H1 (cell line): ENCODE measurements at regions of chr6 and their contacts with region 1.

Region 1: GRCh38 chr6:107691062-107691751 is 132.9 kb downstream of the SCML4 start:
- DNase-seq: no peak
- H3K4me3 ChIP-seq: no peak overlapping the region
- H3K27ac ChIP-seq: no peak overlapping the region
- H3K4me1 ChIP-seq: peaks cover 0 to 4% (median 0%) of the 10 kb centered on the region in 4 experiments; a peak in 2 of 7 replicates
- H3K27me3 ChIP-seq: no peaks in the 10 kb centered on the region
- CTCF ChIP-seq: no peak
- EP300 ChIP-seq: no peak
- POLR2A ChIP-seq: no peak
- RAD21 ChIP-seq: no peak

Region 2: GRCh38 chr6:107246972-107247615 is 444.1 kb before region 1 on chr6:
- CTCF ChIA-PET with region 1: no interaction called
- POLR2A ChIA-PET with region 1: no interaction called
- DNase-seq: no peak
- H3K4me3 ChIP-seq: no peak overlapping the region
- H3K27ac ChIP-seq: no peak overlapping the region
- H3K4me1 ChIP-seq: no peaks in the 10 kb centered on the region
- H3K27me3 ChIP-seq: no peaks in the 10 kb centered on the region
- CTCF ChIP-seq: no peak
- EP300 ChIP-seq: no peak
- POLR2A ChIP-seq: no peak
- RAD21 ChIP-seq: no peak

Region 3: DNA sequence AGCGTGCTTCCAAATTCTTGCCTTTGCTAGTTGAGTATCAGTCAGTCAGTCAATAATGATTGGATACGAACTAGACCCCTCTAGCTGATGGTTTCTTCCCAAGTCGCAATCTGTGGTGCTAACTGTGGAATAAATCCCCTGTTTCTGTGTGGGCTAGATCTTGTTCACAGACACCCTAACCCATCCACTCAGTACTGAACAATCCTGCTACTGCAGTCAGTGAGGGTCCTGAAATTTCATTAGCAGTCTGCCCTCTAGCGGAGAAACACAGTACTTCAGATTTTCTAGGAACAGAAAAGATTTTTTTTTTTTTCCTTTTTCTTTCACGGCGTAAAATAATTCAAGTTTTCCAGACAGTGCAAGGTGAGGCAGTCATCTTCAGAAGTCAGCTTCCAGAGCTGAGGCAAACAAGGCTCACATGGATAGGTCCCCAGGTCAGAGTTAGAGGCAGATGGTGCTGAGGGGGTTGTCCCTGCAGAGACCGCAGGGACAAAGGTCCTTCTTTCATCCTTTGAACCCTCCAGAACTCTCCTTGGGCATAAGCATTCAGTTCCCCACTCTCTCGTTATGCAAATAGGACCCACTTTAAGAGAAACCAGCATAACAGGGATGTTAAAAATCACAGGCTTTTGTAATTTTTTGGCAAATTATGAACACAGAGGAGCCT is 13.3 kb after region 1 on chr6:
- CTCF ChIA-PET with region 1: interaction called, 26 read pairs
- POLR2A ChIA-PET with region 1: no interaction called
- DNase-seq: no peak
- H3K4me3 ChIP-seq: no peak overlapping the region
- H3K27ac ChIP-seq: no peak overlapping the region
- H3K4me1 ChIP-seq: peaks cover 0 to 8% (median 5%) of the 10 kb centered on the region in 4 experiments; a peak in 5 of 7 replicates
- H3K27me3 ChIP-seq: no peaks in the 10 kb centered on the region
- CTCF ChIP-seq: peak in 2 of 3 experiments; percentile 69 to 70; a peak in 3 of 4 replicates
- EP300 ChIP-seq: no peak
- POLR2A ChIP-seq: no peak
- RAD21 ChIP-seq: peak; percentile 70 to 74